Psoas muscle (tissue), 8 donors: ENCODE measurements at regions of chr6 and their contacts with region 1.

Region 1: GRCh38 chr6:99434702-99435530 is 9.8 kb upstream of the PNISR start:
- DNase-seq: no peak
- ATAC-seq: peak in 3 of 4 donors; percentile 67 to 85 (median 67)
- H3K4me3 ChIP-seq: no peak overlapping the region
- H3K27ac ChIP-seq: no peak overlapping the region
- H3K4me1 ChIP-seq: no peaks in the 10 kb centered on the region
- H3K27me3 ChIP-seq: no peaks in the 10 kb centered on the region
- CTCF ChIP-seq: peak; percentile 77

Region 2: GRCh38 chr6:99501762-99502161 is 66.8 kb after region 1 on chr6:
- intact Hi-C with region 1: loop called in 1 of 2 experiments (anchors 10 kb)
- DNase-seq: no peak
- ATAC-seq: no peak
- H3K4me3 ChIP-seq: no peak overlapping the region
- H3K27ac ChIP-seq: no peak overlapping the region
- H3K4me1 ChIP-seq: no peaks in the 10 kb centered on the region
- H3K27me3 ChIP-seq: no peaks in the 10 kb centered on the region
- CTCF ChIP-seq: no peak

Region 3: DNA sequence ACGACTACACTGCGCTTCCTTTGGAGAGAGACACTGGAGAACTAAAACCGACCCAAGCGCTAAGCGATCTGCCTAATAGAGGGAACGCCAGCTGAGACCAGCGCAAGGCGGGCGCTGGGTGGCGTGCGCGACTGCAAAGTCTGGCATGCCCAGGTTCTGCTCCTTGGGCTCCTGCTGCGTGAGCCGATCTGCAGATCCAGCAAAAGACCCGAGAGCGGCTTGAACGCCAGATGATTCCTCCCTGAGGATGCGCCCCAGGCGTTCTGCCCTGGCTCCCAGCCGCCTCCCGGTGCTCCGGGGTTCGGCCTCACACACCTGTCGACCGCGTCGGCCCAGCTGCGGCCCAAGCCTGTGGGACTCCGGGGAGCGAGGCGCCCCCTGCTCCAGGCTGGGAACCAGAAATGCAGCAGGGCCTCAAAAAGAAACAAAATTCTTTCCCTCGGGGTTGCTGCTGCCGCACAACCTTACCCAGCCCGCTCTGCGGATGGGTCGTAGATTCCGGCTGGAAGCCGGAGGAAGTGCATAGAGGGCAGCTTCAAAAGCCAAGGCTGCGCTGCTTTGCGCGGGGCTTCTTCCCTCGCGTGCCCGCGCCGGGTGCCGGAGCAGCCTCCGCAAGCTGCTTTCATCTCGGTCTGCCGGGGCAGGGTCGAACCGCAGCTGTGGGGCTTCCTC is 153.8 kb after region 1 on chr6:
- intact Hi-C with region 1: no loop called
- DNase-seq: peak; percentile 66 to 85
- ATAC-seq: peak; percentile 92 to 98 (median 96)
- H3K4me3 ChIP-seq: peak overlapping the region; percentile 66
- H3K27ac ChIP-seq: no peak overlapping the region
- H3K4me1 ChIP-seq: peaks cover 10% of the 10 kb centered on the region
- H3K27me3 ChIP-seq: peaks cover 8 to 71% (median 16%) of the 10 kb centered on the region in 3 donors
- CTCF ChIP-seq: peak; percentile 58